Adrenal gland (tissue), 19 donors: ENCODE measurements at regions of chr20 and their contacts with region 1.

Region 1: GRCh38 chr20:35619196-35620095 is 3.8 kb downstream of the SPAG4 start:
- DNase-seq: peak; percentile 82 to 90 (median 83)
- H3K4me3 ChIP-seq: peak overlapping the region in 2 of 4 donors; percentile 32 to 62
- H3K27ac ChIP-seq: peak overlapping the region in 3 of 5 donors; percentile 3 to 97 (median 92)
- H3K4me1 ChIP-seq: peaks cover 0 to 33% of the 10 kb centered on the region in 2 donors
- H3K27me3 ChIP-seq: no peaks in the 10 kb centered on the region
- CTCF ChIP-seq: peak in 4 of 6 experiments; percentile 15 to 34 (median 30)
- POLR2A ChIP-seq: peak in 1 of 2 donors; percentile 29

Region 2: GRCh38 chr20:35664544-35665221 is 45.2 kb after region 1 on chr20 and contains the starts of genes CPNE1 and RBM12:
- intact Hi-C with region 1: loop called in 1 of 2 experiments (anchors 5 kb)
- DNase-seq: peak; percentile 93 to 96 (median 94)
- H3K4me3 ChIP-seq: peak within 1 kb of the TSS; percentile 18 to 85 (median 70)
- H3K27ac ChIP-seq: peak within 1 kb of the TSS; percentile 92 to 99 (median 97)
- H3K4me1 ChIP-seq: peaks cover 12 to 36% of the 10 kb centered on the region in 2 donors
- H3K27me3 ChIP-seq: no peaks in the 10 kb centered on the region
- CTCF ChIP-seq: peak in 2 of 6 experiments; percentile 4 to 24
- POLR2A ChIP-seq: peak; percentile 87 to 90
- total RNA-seq, gene CPNE1: 66.8 to 233 (median 156) TPM
- total RNA-seq, gene RBM12: 18.9 to 98.6 (median 57.7) TPM